Posterior cingulate gyrus (tissue), 11 donors: ENCODE measurements at regions of chr7 and their contacts with region 1.

Region 1: GRCh38 chr7:128904381-128905197 is 5.9 kb downstream of the KCP start:
- DNase-seq: peak in 2 of 10 donors; percentile 22 to 37

Region 2: DNA sequence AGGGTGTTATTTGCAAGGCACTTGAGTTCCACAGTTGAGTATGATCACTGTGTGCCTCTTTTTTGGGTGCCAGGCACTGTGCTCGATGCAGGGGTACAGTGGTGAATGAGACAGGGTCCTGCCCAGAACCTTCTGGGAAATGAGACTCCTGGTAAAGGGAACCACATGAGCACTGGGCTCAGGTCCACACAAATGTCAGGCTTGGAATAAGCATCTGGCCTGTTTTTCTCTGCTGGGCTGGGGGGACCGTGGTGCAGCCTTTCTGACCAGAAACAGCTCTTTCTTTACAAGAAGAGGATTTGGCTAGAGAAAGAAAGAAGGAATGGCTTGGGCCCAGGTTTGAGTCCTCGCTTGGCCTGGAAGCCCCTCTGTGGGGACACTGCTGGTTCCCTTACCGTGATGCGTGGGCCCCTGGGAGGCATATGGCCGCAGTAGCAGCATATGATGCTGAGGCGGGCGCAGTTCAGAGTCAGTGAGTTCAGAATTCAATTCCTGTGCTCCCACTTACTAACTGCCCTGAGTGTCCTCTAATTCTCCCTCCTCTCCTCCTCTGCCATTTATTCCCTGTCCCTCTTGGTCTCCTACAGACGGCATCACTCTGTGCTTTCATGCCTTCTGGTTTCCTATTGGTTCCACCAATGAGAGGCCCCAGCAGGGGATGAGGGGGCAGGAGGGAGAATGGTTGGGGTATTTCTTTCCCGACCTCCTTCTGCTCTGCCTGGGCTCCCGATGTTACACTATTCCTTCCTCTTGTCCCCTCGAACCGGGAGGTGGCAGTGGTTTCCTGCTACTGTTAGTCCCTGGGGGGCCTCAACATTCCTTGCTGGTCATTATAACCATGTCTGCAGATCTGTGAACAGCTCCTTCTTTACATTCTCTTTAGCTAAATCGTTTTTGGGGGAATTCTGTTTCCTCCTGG is 15.6 kb after region 1 on chr7:
- intact Hi-C with region 1: no loop called
- DNase-seq: peak in 6 of 10 donors; percentile 9 to 74 (median 32)

Region 3: GRCh38 chr7:129091484-129092002 is 187.0 kb after region 1 on chr7:
- intact Hi-C with region 1: loop called (anchors 2 kb)
- DNase-seq: peak; percentile 54 to 95 (median 86)